PC-9 (cell line): ENCODE measurements at regions of chr9 and their contacts with region 1.

Region 1: DNA sequence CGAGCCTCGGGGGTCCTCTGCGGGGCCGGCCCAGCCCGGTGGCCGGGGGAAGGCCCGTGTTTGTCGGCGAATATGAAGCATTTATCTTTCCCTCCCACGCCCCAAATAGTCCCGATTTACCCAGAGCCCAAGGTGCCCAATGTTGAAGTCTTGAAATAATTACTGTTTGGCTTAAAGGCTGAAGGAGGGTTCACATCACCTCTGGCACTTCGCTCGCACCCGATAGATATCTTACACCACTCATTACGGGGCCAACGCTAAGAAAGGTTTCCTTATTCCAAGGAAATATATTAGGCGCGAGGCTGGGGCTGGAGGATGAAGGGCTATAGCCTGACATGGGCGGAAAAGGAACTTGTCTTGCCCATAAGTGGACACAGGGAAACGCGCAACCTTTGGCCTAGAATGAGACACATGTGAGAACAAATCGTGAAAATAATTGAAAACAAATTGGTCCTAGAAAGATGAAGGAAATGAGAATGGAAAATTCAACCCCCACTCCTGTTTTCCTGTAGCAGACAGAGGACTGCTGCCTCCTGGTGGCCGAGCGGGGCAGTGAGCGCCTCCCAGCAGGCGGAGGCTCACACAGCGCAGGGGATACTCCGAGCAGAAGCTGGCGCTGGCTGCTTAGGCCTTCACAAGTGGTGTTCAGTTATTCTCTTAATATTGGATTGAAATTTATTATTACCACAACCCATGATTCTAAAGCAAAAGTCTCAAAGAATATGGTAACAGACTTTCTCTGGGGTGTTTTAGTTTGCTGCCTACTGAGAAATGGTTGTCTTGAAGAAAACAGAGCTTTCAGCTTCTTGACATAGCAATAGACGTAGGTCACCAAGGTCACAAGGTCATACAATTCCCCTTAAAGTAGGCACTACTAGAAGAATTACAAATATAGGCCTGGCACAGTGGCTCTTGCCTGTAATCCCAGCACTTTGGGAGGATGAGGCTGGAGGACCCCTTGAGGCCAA is 7.9 kb downstream of the CCL21 start:
- DNase-seq: peak; percentile 37 to 69
- H3K4me3 ChIP-seq: peak overlapping the region; percentile 59
- H3K27ac ChIP-seq: no peak overlapping the region
- H3K4me1 ChIP-seq: no peaks in the 10 kb centered on the region
- H3K27me3 ChIP-seq: peaks cover 11% of the 10 kb centered on the region
- CTCF ChIP-seq: peak; percentile 89

Region 2: DNA sequence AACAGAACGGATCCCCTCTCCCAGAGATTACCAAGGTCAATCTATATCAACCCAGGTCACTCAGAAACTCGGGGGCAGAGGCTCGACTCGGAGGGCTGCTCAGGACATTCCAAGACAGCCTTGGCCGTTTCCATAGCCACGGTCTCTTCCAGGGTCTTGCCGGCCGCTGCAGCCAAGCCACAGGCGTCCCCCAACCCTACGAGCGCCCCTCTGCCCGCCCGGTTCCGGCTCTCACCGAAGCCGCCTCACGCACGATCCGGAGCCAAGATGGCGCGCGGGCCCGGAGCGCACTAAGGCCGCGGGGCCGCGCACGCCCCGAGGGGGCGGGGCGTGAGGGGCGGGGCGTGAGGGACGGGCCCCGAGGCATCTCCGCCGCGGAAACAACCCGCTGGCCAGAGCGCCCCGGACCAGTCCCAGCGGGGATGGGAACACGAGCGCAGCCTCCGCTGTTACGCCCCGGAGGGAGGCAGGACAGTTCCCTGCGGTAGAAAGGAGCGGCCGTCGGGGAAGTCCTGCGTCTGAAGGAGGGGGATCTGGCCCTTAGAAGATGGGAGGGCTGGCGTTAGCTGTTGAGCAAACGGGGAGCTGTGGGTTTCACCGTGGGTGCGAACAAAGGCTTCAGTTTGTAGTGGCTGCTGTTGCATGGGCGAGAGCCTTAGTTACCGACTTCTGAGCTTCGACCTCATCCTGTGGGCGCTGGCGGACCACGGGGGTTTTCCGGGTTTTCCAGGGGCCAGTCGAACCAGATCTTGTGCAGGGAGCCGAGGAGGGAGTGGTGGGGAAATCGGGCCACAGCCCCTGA is 90.0 kb before region 1 on chr9 and contains the start of gene RPP25L:
- CTCF ChIA-PET with region 1: no interaction called
- POLR2A ChIA-PET with region 1: no interaction called
- intact Hi-C with region 1: loop called (anchors 2 kb)
- DNase-seq: peak; percentile 52 to 78
- H3K4me3 ChIP-seq: peak within 1 kb of the TSS; percentile 86
- H3K27ac ChIP-seq: peak within 1 kb of the TSS; percentile 23; the same call in 1 of the 2 replicates
- H3K4me1 ChIP-seq: 0 out of 2 replicates have a peak, but pooled peaks cover 4% of the 10 kb centered on the region
- H3K27me3 ChIP-seq: no peaks in the 10 kb centered on the region
- CTCF ChIP-seq: no peak
- total RNA-seq, gene RPP25L: 15.6 and 19.4 TPM in 2 replicates

Region 3: GRCh38 chr9:35014517-35014916 is 312.5 kb after region 1 on chr9:
- CTCF ChIA-PET with region 1: interaction called, 11 read pairs
- POLR2A ChIA-PET with region 1: no interaction called
- intact Hi-C with region 1: no loop called
- DNase-seq: no peak
- H3K4me3 ChIP-seq: no peak overlapping the region
- H3K27ac ChIP-seq: no peak overlapping the region
- H3K4me1 ChIP-seq: no peaks in the 10 kb centered on the region
- H3K27me3 ChIP-seq: no peaks in the 10 kb centered on the region
- CTCF ChIP-seq: no peak